K562 (cell line): ENCODE measurements at regions of chr18 and their contacts with region 1.

Region 1: DNA sequence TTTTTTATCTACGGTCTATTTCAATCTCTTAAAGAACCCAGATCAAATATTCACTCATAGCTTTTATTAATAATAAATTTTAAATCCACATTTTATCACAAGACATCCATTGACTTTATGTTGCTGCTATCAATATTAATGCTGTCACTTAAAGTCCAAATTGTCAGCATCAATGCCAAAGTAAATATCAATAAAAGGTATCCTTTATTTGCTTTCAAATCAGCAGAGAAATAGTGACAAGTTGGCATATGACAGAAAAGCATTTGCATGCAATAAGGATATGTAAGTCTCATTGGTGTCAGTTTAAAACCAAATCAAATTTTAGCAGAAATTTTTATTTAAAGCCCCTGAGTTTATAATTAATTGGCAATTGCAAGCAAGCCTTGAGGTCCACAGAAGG is 775.4 kb downstream of the ADCYAP1 start:
- DNase-seq: no peak
- ATAC-seq: no peak
- H3K4me3 ChIP-seq: no peak overlapping the region
- H3K27ac ChIP-seq: no peak overlapping the region
- H3K4me1 ChIP-seq: no peaks in the 10 kb centered on the region
- H3K27me3 ChIP-seq: no peaks in the 10 kb centered on the region
- CTCF ChIP-seq: no peak
- EP300 ChIP-seq: no peak
- POLR2A ChIP-seq: no peak
- RAD21 ChIP-seq: no peak

Region 2: DNA sequence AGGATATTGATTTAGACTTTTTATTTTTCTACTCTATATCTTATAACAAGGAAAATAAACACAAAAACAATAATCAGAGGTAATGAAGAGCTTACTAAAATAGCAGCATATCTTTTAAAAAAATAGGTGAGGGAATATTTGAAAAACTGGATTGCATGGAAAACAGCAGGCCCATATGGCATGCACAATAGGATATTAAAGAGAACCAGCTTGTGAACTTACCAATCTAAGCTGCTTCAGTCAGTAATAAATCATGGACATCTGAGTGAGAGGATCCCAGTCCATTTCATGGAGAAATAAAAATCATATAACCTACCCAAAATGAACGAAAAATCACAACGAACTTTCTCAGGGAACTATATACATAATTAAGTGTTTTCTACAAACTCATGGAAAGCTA is 140.8 kb before region 1 on chr18:
- CTCF ChIA-PET with region 1: no interaction called
- POLR2A ChIA-PET with region 1: no interaction called
- in situ Hi-C with region 1: no loop called
- intact Hi-C with region 1: no loop called
- DNase-seq: no peak
- ATAC-seq: no peak
- H3K4me3 ChIP-seq: no peak overlapping the region
- H3K27ac ChIP-seq: no peak overlapping the region
- H3K4me1 ChIP-seq: no peaks in the 10 kb centered on the region
- H3K27me3 ChIP-seq: no peaks in the 10 kb centered on the region
- CTCF ChIP-seq: no peak
- EP300 ChIP-seq: no peak
- POLR2A ChIP-seq: no peak
- RAD21 ChIP-seq: no peak

Region 3: DNA sequence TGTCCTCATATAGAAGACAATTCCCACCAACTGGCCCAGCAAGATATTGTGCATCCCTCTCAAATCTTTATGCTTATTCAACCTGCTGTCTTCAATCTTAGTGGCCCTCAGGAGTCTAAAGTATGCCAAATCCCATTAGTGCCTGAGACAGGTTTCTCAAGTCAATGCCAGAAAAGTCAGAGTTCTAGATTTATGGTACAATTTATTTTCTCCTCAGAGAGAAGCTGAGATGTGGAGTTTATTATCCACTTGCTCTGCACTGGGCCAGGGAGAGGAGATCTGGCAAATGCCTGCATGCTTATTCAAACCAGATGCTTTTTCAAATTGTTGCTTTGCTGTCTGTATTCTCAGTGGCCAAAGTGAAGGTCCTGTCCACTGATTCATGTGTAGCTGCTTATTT is 66.0 kb after region 1 on chr18:
- CTCF ChIA-PET with region 1: no interaction called
- POLR2A ChIA-PET with region 1: interaction called, 3 read pairs
- in situ Hi-C with region 1: loop called (anchors 5 kb)
- intact Hi-C with region 1: no loop called
- DNase-seq: no peak
- ATAC-seq: no peak
- H3K4me3 ChIP-seq: no peak overlapping the region
- H3K27ac ChIP-seq: no peak overlapping the region
- H3K4me1 ChIP-seq: no peaks in the 10 kb centered on the region
- H3K27me3 ChIP-seq: no peaks in the 10 kb centered on the region
- CTCF ChIP-seq: no peak
- EP300 ChIP-seq: no peak
- POLR2A ChIP-seq: no peak
- RAD21 ChIP-seq: no peak